MCF 10A (cell line): ENCODE measurements at regions of chr22 and their contacts with region 1.

Region 1: DNA sequence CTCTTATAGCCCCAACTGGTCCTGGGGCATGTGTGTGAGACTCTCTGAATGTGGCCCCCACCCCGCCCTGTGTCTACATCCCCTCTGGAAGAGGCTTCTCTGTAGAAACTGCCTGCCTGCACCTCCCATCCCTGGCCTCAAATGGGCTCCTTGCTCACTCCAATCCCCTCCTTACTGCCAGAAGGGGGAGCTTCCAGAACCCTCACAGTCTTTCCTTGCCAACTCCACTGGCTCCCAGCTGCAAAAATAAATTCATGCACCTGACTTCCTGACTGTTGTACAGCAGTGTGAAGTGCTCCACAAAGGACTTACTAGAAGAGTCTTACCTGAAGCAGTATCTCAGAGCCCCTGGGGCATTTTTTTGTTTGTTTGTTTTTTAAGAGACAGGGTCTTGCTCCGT is 15.2 kb upstream of the SERPIND1 start:
- DNase-seq: peak; percentile 14
- H3K4me3 Mint-ChIP-seq: no peak overlapping the region
- H3K27ac Mint-ChIP-seq: no peak overlapping the region
- H3K4me1 Mint-ChIP-seq: no peaks in the 10 kb centered on the region
- H3K27me3 Mint-ChIP-seq: no peaks in the 10 kb centered on the region
- CTCF ChIP-seq: no peak

Region 2: DNA sequence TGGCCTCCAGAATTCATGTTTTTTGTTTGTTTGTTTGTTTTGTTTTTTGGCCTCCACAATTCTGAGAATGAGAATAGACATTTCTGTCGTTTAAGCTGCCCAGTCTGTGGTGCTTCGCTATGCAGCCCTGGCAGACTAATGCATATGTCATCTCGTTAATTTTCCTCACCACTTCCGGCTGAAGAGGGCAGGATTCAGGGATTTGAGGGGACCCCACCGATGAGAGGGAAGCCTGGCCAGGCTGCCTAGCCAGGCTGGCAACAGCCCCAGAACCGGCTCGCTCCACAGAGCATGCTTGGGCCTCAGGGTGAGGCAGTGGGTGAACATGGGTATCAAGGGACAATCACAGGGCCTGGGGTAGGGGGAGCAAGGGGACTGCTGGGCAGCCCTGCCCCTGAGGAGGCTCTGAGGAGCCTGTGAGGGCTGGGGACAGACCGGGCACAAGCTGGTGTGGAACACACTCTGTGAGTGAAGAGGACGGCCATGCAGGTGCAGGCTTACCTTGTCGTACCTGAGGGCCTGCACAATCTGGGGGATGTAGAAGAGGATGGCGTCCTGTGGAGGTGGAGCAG is 32.6 kb before region 1 on chr22:
- CTCF ChIA-PET with region 1: no interaction called
- POLR2A ChIA-PET with region 1: no interaction called
- intact Hi-C with region 1: no loop called
- DNase-seq: no peak
- H3K4me3 Mint-ChIP-seq: no peak overlapping the region
- H3K27ac Mint-ChIP-seq: no peak overlapping the region
- H3K4me1 Mint-ChIP-seq: no peaks in the 10 kb centered on the region
- H3K27me3 Mint-ChIP-seq: no peaks in the 10 kb centered on the region
- CTCF ChIP-seq: no peak

Region 3: DNA sequence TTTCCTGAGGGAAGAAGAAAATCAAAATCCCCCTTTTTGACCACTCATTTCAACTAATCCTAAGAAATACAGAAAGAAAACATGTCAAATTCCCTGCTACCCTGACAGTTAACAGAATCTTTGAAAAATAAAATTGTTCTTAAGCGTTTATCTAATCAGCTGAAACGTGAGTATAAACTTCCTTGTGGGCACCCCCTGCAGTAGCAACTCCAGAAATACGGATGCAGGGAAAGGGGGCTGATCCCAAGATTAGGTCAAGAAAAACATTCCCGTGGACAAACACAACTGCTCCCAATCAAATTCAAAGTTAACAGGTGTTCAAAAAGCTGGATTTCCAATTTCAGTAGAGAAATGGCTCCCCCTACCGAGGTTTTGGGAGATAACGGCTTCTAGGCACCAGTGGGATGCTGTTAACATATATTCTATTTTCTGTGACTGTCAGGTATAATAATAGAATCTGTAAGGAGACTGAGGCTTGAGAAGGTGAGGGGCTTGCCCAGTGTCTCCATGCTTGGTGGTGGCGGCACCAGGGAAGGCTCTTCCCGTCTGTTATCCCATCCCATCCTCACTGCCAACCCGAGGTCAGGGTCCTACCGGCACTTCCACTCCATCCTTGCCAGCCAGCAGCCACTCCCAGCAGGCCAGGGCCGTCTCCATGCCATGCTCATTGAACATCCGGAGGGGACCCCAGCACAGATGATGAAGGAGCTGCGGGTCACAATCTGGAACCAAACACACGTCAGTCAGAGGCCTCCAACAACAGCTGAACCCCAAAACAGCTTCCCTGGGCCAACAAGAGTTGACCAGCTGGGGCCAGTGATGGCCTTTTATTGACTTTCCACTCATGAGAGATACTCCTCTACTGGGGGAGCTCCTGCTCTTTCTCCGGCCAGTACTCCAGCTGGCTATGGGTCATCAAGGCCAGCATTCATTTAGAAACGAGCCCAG is 16.8 kb before region 1 on chr22:
- CTCF ChIA-PET with region 1: interaction called, 11 read pairs
- POLR2A ChIA-PET with region 1: no interaction called
- intact Hi-C with region 1: no loop called
- DNase-seq: peak; percentile 62
- H3K4me3 Mint-ChIP-seq: no peak overlapping the region
- H3K27ac Mint-ChIP-seq: no peak overlapping the region
- H3K4me1 Mint-ChIP-seq: no peaks in the 10 kb centered on the region
- H3K27me3 Mint-ChIP-seq: no peaks in the 10 kb centered on the region
- CTCF ChIP-seq: peak; percentile 85

Region 4: GRCh38 chr22:20816559-20816958 is 57.9 kb after region 1 on chr22:
- CTCF ChIA-PET with region 1: no interaction called
- POLR2A ChIA-PET with region 1: no interaction called
- intact Hi-C with region 1: no loop called
- DNase-seq: no peak
- H3K4me3 Mint-ChIP-seq: no peak overlapping the region
- H3K27ac Mint-ChIP-seq: no peak overlapping the region
- H3K4me1 Mint-ChIP-seq: no peaks in the 10 kb centered on the region
- H3K27me3 Mint-ChIP-seq: no peaks in the 10 kb centered on the region
- CTCF ChIP-seq: no peak